ENCODE measurements at regions of chr11 and their contacts with region 1.

Region 1: GRCh38 chr11:26537341-26537740 is 34.7 kb downstream of the MUC15 start:
- DNase-seq: no peak
- H3K4me3 ChIP-seq: no peak overlapping the region
- H3K27ac ChIP-seq: no peak overlapping the region
- H3K4me1 ChIP-seq: no peaks in the 10 kb centered on the region
- CTCF ChIP-seq: no peak

Region 2: GRCh38 chr11:26473216-26474194 is 63.8 kb before region 1 on chr11:
- CTCF ChIA-PET with region 1: no interaction called
- POLR2A ChIA-PET with region 1: no interaction called
- intact Hi-C with region 1: loop called (anchors 10 kb)
- DNase-seq: no peak
- H3K4me3 ChIP-seq: no peak overlapping the region
- H3K27ac ChIP-seq: no peak overlapping the region
- H3K4me1 ChIP-seq: no peaks in the 10 kb centered on the region
- CTCF ChIP-seq: no peak

Region 3: GRCh38 chr11:26510756-26511155 is 26.6 kb before region 1 on chr11:
- CTCF ChIA-PET with region 1: no interaction called
- POLR2A ChIA-PET with region 1: no interaction called
- intact Hi-C with region 1: no loop called
- DNase-seq: no peak
- H3K4me3 ChIP-seq: no peak overlapping the region
- H3K27ac ChIP-seq: no peak overlapping the region
- H3K4me1 ChIP-seq: no peaks in the 10 kb centered on the region
- CTCF ChIP-seq: no peak